ENCODE measurements at regions of chr11 and their contacts with region 1.

Region 1: GRCh38 chr11:3021125-3021524 is 29.0 kb upstream of the NAP1L4 start:
- DNase-seq: no peak
- H3K4me3 Mint-ChIP-seq: no peak overlapping the region
- H3K27ac Mint-ChIP-seq: no peak overlapping the region
- H3K4me1 Mint-ChIP-seq: peaks cover 33% of the 10 kb centered on the region
- H3K27me3 Mint-ChIP-seq: no peaks in the 10 kb centered on the region

Region 2: DNA sequence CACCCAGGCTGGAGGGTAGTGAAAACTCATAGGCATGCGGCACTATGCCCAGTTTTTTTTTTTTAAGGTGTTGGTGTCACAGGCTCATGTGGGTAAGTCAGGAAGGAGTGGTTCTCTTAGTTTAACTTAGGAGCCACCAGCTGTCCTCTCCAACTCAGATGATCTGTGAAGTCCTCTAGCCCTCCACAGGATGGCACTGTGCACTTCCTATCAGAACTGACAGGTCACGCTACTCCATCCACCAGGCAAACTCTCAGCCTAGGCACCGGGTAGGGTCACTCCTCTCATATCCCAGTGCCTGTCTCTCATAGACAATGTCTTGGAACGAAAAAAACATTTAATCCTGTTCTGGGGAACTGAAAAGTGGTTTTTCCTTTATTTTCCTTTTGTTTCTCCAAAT is 45.5 kb before region 1 on chr11:
- intact Hi-C with region 1: loop called (anchors 1 kb)
- DNase-seq: no peak
- H3K4me3 Mint-ChIP-seq: no peak overlapping the region
- H3K27ac Mint-ChIP-seq: no peak overlapping the region
- H3K4me1 Mint-ChIP-seq: peaks cover 18% of the 10 kb centered on the region
- H3K27me3 Mint-ChIP-seq: no peaks in the 10 kb centered on the region

Region 3: DNA sequence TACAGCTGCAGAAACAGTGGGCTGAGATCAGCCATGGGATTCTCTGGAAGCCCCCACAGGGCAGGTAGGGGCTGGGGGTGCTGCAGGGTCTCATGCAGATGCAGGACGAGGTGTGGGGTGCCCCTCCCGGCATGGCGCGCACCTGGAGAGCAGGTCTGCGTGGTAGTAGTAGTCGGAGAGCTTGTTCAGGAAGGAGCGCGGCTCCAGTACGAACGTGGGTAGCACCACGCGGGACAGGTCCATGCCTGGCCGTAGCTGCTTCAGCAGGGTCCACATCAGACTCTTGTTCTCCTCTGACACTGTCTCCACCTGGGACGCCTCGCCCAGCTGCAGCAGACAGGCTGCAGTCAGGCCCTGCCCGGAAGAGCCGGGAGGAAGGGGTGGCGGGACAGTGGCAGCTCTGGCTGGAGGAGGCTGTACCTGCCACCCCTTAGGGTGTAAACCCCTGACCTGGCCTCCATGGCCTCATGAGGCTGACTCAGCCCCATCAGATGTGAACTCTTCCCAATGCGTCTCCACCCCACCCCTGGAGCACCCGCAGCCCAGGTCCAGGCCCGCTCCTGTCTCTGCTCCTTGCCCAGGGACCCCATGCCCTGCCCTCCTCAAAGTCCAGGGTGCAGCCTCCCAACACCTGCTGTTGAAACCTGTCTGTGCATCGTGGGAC is 83.1 kb after region 1 on chr11:
- intact Hi-C with region 1: no loop called
- DNase-seq: no peak
- H3K4me3 Mint-ChIP-seq: no peak overlapping the region
- H3K27ac Mint-ChIP-seq: no peak overlapping the region
- H3K4me1 Mint-ChIP-seq: peaks cover under 1% of the 10 kb centered on the region
- H3K27me3 Mint-ChIP-seq: no peaks in the 10 kb centered on the region